K562 (cell line): ENCODE measurements at regions of chr1 and their contacts with region 1.

Region 1: GRCh38 chr1:166705376-166706289 is 133.6 kb upstream of the POGK start:
- DNase-seq: peak; percentile 90 to 97 (median 94)
- ATAC-seq: peak; percentile 92
- H3K4me3 ChIP-seq: no peak overlapping the region
- H3K27ac ChIP-seq: peak overlapping the region; percentile 83
- H3K4me1 ChIP-seq: peaks cover 8 to 56% of the 10 kb centered on the region in 2 experiments
- H3K27me3 ChIP-seq: no peaks in the 10 kb centered on the region
- CTCF ChIP-seq: no peak
- EP300 ChIP-seq: peak; percentile 100
- POLR2A ChIP-seq: no peak
- RAD21 ChIP-seq: peak; percentile 21 to 30; a peak in 2 of 4 replicates

Region 2: GRCh38 chr1:166514067-166514466 is 191.6 kb before region 1 on chr1:
- CTCF ChIA-PET with region 1: no interaction called
- POLR2A ChIA-PET with region 1: no interaction called
- in situ Hi-C with region 1: no loop called
- intact Hi-C with region 1: no loop called
- DNase-seq: no peak
- ATAC-seq: no peak
- H3K4me3 ChIP-seq: no peak overlapping the region
- H3K27ac ChIP-seq: no peak overlapping the region
- H3K4me1 ChIP-seq: no peaks in the 10 kb centered on the region
- H3K27me3 ChIP-seq: no peaks in the 10 kb centered on the region
- CTCF ChIP-seq: no peak
- EP300 ChIP-seq: no peak
- POLR2A ChIP-seq: no peak
- RAD21 ChIP-seq: no peak

Region 3: GRCh38 chr1:166588741-166589140 is 116.9 kb before region 1 on chr1:
- CTCF ChIA-PET with region 1: no interaction called
- POLR2A ChIA-PET with region 1: no interaction called
- in situ Hi-C with region 1: no loop called
- intact Hi-C with region 1: loop called (anchors 1 kb)
- DNase-seq: no peak
- ATAC-seq: no peak
- H3K4me3 ChIP-seq: no peak overlapping the region
- H3K27ac ChIP-seq: no peak overlapping the region
- H3K4me1 ChIP-seq: peaks cover 9 to 25% of the 10 kb centered on the region in 2 experiments
- H3K27me3 ChIP-seq: no peaks in the 10 kb centered on the region
- CTCF ChIP-seq: no peak
- EP300 ChIP-seq: no peak
- POLR2A ChIP-seq: no peak
- RAD21 ChIP-seq: no peak

Region 4: GRCh38 chr1:166691476-166691875 is 14.2 kb before region 1 on chr1:
- CTCF ChIA-PET with region 1: no interaction called
- POLR2A ChIA-PET with region 1: interaction called, 16 read pairs
- in situ Hi-C with region 1: no loop called
- intact Hi-C with region 1: no loop called
- DNase-seq: peak in 1 of 4 experiments; percentile 31
- ATAC-seq: peak; percentile 38
- H3K4me3 ChIP-seq: no peak overlapping the region
- H3K27ac ChIP-seq: no peak overlapping the region
- H3K4me1 ChIP-seq: peaks cover 4 to 44% of the 10 kb centered on the region in 2 experiments; a peak in 4 of 5 replicates
- H3K27me3 ChIP-seq: no peaks in the 10 kb centered on the region
- CTCF ChIP-seq: no peak
- EP300 ChIP-seq: no peak
- POLR2A ChIP-seq: no peak
- RAD21 ChIP-seq: no peak